Sigmoid colon (tissue), 7 donors: ENCODE measurements at regions of chr4 and their contacts with region 1.

Region 1: GRCh38 chr4:168153596-168154440 is 61.5 kb downstream of the ANXA10 start:
- DNase-seq: no peak
- H3K4me3 ChIP-seq: peak overlapping the region in 3 of 4 donors; percentile 6 to 32 (median 25)
- H3K27ac ChIP-seq: no peak overlapping the region
- H3K4me1 ChIP-seq: no peaks in the 10 kb centered on the region
- H3K27me3 ChIP-seq: no peaks in the 10 kb centered on the region
- CTCF ChIP-seq: peak in 2 of 4 experiments; percentile 34 to 56
- EP300 ChIP-seq: no peak
- POLR2A ChIP-seq: no peak

Region 2: GRCh38 chr4:166165829-166166420 is 1987.9 kb before region 1 on chr4:
- intact Hi-C with region 1: loop called (anchors 10 kb)
- DNase-seq: no peak
- H3K4me3 ChIP-seq: no peak overlapping the region
- H3K27ac ChIP-seq: no peak overlapping the region
- H3K4me1 ChIP-seq: no peaks in the 10 kb centered on the region
- H3K27me3 ChIP-seq: no peaks in the 10 kb centered on the region
- CTCF ChIP-seq: peak; percentile 14 to 65 (median 55)
- EP300 ChIP-seq: no peak
- POLR2A ChIP-seq: no peak

Region 3: DNA sequence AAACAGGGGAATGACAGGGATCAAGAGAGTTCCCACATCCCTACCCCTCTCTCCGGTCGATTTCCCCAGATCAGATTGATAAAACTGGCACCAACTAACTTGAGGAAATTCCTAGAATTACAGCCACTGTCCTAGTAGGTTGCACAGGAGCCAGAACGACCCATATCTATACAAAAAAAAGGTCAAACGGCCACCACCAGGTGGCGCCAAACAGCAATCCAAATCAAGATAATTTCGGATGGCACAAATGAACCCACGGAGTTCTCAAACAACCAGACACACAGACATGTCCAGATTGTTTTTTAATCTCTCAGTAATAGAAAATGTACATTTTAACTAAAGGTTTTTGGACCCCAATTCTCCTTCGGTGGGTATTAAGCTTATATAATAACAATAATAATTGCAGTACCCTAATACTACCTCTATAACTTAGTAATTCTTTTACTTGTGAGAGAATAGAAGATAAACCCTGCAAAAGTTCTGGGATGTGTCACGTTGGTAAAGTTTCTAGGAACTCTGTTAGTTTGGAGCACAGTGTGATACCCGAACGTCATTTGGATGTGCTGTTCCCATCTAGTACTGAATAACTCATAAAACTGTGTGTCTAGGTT is 1132.2 kb before region 1 on chr4:
- intact Hi-C with region 1: loop called (anchors 5 kb)
- DNase-seq: peak; percentile 66
- H3K4me3 ChIP-seq: no peak overlapping the region
- H3K27ac ChIP-seq: no peak overlapping the region
- H3K4me1 ChIP-seq: no peaks in the 10 kb centered on the region
- H3K27me3 ChIP-seq: no peaks in the 10 kb centered on the region
- CTCF ChIP-seq: peak in 3 of 4 experiments; percentile 57 to 75 (median 58)
- EP300 ChIP-seq: no peak
- POLR2A ChIP-seq: no peak

Region 4: DNA sequence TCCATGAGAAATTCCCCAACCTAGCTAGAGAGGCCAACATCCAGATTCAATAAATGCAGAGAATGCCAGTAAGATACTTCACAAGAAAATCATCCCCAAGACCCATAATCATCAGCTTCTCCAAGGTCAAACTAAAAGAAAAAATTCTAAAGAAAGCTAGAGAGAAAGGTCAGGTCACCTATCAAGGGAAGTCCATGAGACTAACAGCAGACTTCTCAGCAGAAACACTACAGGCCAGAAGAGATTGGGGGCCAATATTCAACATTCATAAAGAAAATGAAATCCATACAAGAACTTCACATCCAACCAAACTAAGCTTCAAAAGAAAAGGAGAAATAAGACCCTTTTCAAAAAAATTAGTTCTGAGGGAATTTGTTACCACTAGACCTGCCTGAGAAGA is 180.3 kb before region 1 on chr4:
- intact Hi-C with region 1: no loop called
- DNase-seq: no peak
- H3K4me3 ChIP-seq: no peak overlapping the region
- H3K27ac ChIP-seq: no peak overlapping the region
- H3K4me1 ChIP-seq: no peaks in the 10 kb centered on the region
- H3K27me3 ChIP-seq: no peaks in the 10 kb centered on the region
- CTCF ChIP-seq: no peak
- EP300 ChIP-seq: no peak
- POLR2A ChIP-seq: no peak